ENCODE measurements at regions of chr17 and their contacts with region 1.

Region 1: DNA sequence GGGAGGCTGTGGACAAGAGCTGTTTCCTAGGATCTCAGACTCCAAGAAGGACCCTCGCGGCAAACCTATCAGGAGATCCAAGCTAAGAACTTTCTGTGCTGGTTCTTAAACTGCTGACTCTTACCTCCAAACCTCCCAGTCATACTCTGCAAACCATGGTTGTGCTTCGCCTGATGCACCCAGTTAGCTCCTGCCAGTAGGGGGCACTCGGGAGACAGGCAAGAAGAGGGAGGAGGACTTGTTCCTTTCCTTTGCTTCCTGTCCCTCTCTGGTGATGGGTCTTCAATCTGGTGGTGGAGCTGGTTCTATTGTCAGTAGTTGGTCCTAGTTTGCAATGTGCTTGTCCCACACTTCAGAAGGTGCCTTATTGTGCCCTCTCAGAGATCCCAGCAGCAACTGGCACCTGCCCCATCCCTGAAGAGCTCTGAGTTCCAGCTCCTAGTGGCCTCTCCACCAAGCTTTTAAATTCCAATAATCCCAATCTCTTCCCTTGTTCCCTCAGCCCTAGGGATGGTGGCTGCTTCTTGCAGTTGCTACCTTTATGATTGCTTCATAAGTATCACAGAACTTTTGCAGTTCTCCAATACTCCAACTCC is 113.5 kb upstream of the RPL38 start:
- DNase-seq: peak; percentile 11
- ATAC-seq: peak; percentile 79
- H3K4me3 ChIP-seq: no peak overlapping the region
- H3K27ac ChIP-seq: no peak overlapping the region
- H3K4me1 ChIP-seq: no peaks in the 10 kb centered on the region
- H3K27me3 ChIP-seq: no peaks in the 10 kb centered on the region; a peak in 1 of 4 replicates
- CTCF ChIP-seq: peak; percentile 68 to 90 (median 89)
- EP300 ChIP-seq: no peak
- POLR2A ChIP-seq: no peak
- RAD21 ChIP-seq: peak; percentile 52

Region 2: GRCh38 chr17:73976676-73977521 is 113.1 kb before region 1 on chr17:
- CTCF ChIA-PET with region 1: no interaction called
- POLR2A ChIA-PET with region 1: no interaction called
- RAD21 ChIA-PET with region 1: no interaction called
- SMC1A ChIA-PET with region 1: no interaction called
- in situ Hi-C with region 1: no loop called
- intact Hi-C with region 1: no loop called
- DNase-seq: no peak
- ATAC-seq: no peak
- H3K4me3 ChIP-seq: no peak overlapping the region
- H3K27ac ChIP-seq: no peak overlapping the region
- H3K4me1 ChIP-seq: peaks cover 4% of the 10 kb centered on the region
- H3K27me3 ChIP-seq: peaks cover 2 to 4% of the 10 kb centered on the region in 2 experiments; a peak in 2 of 4 replicates
- CTCF ChIP-seq: no peak
- EP300 ChIP-seq: no peak
- POLR2A ChIP-seq: no peak
- RAD21 ChIP-seq: no peak

Region 3: GRCh38 chr17:74182041-74182723 is 92.2 kb after region 1 on chr17:
- CTCF ChIA-PET with region 1: interaction called, 19 read pairs
- POLR2A ChIA-PET with region 1: no interaction called
- RAD21 ChIA-PET with region 1: no interaction called
- SMC1A ChIA-PET with region 1: interaction called, 6 read pairs
- in situ Hi-C with region 1: no loop called
- intact Hi-C with region 1: no loop called
- DNase-seq: no peak
- ATAC-seq: no peak
- H3K4me3 ChIP-seq: no peak overlapping the region
- H3K27ac ChIP-seq: no peak overlapping the region
- H3K4me1 ChIP-seq: no peaks in the 10 kb centered on the region
- H3K27me3 ChIP-seq: peaks cover 0 to 2% of the 10 kb centered on the region in 2 experiments; a peak in 2 of 4 replicates
- CTCF ChIP-seq: no peak
- EP300 ChIP-seq: no peak
- POLR2A ChIP-seq: no peak
- RAD21 ChIP-seq: no peak